ENCODE measurements at regions of chr4 and their contacts with region 1.

Region 1: GRCh38 chr4:25367004-25367621 is 9.9 kb upstream of the ANAPC4 start:
- DNase-seq: no peak
- ATAC-seq: no peak
- H3K4me3 ChIP-seq: no peak overlapping the region
- H3K27ac ChIP-seq: no peak overlapping the region
- H3K4me1 ChIP-seq: no peaks in the 10 kb centered on the region
- H3K27me3 ChIP-seq: no peaks in the 10 kb centered on the region
- CTCF ChIP-seq: peak; percentile 58; the same call in 1 of the 2 replicates

Region 2: DNA sequence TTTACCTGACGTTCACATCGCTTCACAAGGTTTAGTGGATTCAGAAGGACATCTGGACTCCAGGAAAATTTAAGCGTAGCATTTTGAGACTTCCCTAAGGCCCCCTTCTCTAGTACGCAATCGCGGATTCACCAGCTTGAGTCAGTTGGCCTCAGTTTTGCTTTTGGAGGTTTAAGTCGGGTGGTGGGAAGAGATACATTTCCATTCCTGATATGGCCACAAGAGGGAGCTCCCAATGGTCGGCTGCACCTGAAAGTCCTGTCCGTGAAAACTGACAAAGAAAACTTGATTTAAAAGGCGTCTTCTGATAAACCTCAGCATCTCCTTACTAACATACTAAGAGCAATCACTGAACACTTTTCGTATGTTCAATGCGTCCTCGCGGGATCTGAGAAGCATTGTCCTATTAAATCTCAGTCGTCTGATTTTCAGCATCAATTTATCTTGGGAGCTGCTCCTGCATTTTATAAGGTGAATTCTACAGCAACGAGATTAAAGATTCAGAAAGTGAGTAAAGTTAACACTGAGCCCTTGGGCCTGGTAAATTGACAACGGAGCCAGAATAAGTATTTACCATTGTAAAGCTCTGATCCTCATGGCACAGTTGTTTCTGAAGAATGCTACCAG is 386.9 kb before region 1 on chr4:
- CTCF ChIA-PET with region 1: interaction called, 3 read pairs
- POLR2A ChIA-PET with region 1: no interaction called
- in situ Hi-C with region 1: no loop called
- intact Hi-C with region 1: loop called (anchors 5 kb)
- DNase-seq: peak; percentile 33
- ATAC-seq: peak; percentile 70; the same call in 1 of the 2 replicates
- H3K4me3 ChIP-seq: peak overlapping the region in 1 of 2 experiments; percentile 38; a peak in 2 of 4 replicates
- H3K27ac ChIP-seq: no peak overlapping the region
- H3K4me1 ChIP-seq: no peaks in the 10 kb centered on the region; the same call in 1 of the 2 replicates
- H3K27me3 ChIP-seq: no peaks in the 10 kb centered on the region; the same call in 1 of the 2 replicates
- CTCF ChIP-seq: peak; percentile 85

Region 3: GRCh38 chr4:25159884-25160713 is 207.0 kb before region 1 on chr4 and contains the start of gene SEPSECS:
- CTCF ChIA-PET with region 1: interaction called, 4 read pairs
- POLR2A ChIA-PET with region 1: no interaction called
- in situ Hi-C with region 1: no loop called
- intact Hi-C with region 1: loop called (anchors 10 kb)
- DNase-seq: peak; percentile 93
- ATAC-seq: peak; percentile 95
- H3K4me3 ChIP-seq: peak within 1 kb of the TSS; percentile 72 to 96
- H3K27ac ChIP-seq: peak within 1 kb of the TSS; percentile 84
- H3K4me1 ChIP-seq: peaks cover 10% of the 10 kb centered on the region
- H3K27me3 ChIP-seq: no peaks in the 10 kb centered on the region
- CTCF ChIP-seq: no peak
- total RNA-seq, gene SEPSECS: 4.0 TPM